HCT116 (cell line): ENCODE measurements at regions of chr13 and their contacts with region 1.

Region 1: GRCh38 chr13:28796938-28797257 is 23.2 kb upstream of the MTUS2 start:
- DNase-seq: no peak
- ATAC-seq: peak; percentile 35
- H3K4me3 ChIP-seq: no peak overlapping the region
- H3K27ac ChIP-seq: no peak overlapping the region
- H3K4me1 ChIP-seq: peaks cover 0 to 6% of the 10 kb centered on the region in 2 experiments; a peak in 2 of 4 replicates
- H3K27me3 ChIP-seq: no peaks in the 10 kb centered on the region
- CTCF ChIP-seq: no peak
- POLR2A ChIP-seq: no peak
- RAD21 ChIP-seq: no peak

Region 2: DNA sequence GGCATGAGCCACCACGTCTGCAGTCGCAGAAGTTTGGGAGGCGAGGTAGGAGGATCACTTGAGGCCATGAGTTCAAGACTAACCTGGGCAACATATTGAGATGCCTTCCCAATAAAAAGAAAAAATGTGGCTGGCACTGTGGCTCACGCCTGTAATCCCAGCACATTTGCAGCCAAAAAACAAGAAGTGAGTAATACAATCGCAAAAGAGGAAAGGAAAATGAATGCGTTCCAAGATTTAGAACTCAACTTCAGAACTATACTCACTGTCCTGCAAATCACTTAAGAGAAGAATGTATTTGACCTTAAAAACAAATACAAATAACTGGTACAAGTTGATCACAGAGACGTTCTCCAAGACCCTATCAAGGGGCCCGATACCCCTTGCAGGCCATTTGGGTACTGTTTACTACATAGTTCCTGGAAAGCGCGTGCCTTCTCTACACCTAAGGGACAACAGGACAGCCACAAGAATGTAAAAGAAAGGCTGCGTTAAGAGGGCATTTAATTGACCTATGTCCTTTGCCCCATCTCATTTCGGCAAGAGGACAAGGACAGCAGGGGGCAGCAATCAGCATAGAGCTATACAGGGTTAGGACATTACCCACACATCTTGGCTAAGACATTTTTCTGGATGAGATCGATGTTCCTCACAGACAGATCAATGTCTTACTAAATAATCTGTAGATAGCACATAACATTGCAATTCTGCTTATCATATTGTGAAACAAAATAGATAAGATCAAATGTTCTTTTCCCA is 737.9 kb before region 1 on chr13:
- CTCF ChIA-PET with region 1: interaction called, 5 read pairs
- POLR2A ChIA-PET with region 1: no interaction called
- RAD21 ChIA-PET with region 1: interaction called in 1 of 2 experiments, 3 read pairs
- intact Hi-C with region 1: loop called (anchors 1 kb)
- DNase-seq: peak; percentile 43
- ATAC-seq: peak; percentile 88
- H3K4me3 ChIP-seq: no peak overlapping the region
- H3K27ac ChIP-seq: no peak overlapping the region
- H3K4me1 ChIP-seq: no peaks in the 10 kb centered on the region
- H3K27me3 ChIP-seq: no peaks in the 10 kb centered on the region
- CTCF ChIP-seq: peak; percentile 46 to 82 (median 74); a peak in 5 of 6 replicates
- POLR2A ChIP-seq: no peak
- RAD21 ChIP-seq: peak; percentile 65

Region 3: DNA sequence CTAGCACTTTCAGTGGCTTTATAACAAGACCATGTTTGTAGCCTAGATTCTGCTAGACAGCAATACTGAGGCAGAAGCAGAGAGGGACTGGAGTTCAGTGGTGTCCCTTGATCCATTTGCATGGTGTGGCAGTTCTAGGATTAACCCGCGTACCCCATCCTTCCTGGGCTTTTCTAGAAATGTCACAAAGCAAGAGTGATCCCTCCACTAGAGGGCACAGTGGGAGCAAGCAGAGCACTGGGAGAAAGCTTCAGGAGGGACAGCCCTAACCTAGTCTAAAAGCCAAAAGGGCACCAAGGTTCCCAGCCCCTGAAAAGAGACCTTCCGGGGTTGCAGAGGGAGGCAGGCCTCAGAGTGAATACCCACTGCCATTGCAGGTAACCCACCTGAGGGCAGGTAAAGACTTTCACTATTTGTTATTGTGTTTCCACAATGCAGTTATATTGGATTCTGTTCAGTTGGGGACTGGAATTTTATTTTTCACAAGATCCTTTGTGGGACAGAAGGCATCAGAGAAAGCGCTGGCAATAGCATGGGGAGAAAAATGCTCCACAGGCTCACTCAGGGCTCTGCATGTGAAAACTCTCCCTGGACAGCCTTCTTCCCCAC is 472.6 kb before region 1 on chr13:
- CTCF ChIA-PET with region 1: interaction called, 8 read pairs
- POLR2A ChIA-PET with region 1: no interaction called
- RAD21 ChIA-PET with region 1: interaction called in 1 of 2 experiments, 3 read pairs
- intact Hi-C with region 1: loop called (anchors 1 kb)
- DNase-seq: peak; percentile 60
- ATAC-seq: peak; percentile 95
- H3K4me3 ChIP-seq: no peak overlapping the region
- H3K27ac ChIP-seq: no peak overlapping the region
- H3K4me1 ChIP-seq: no peaks in the 10 kb centered on the region
- H3K27me3 ChIP-seq: no peaks in the 10 kb centered on the region
- CTCF ChIP-seq: peak; percentile 57 to 86 (median 81); a peak in 5 of 6 replicates
- POLR2A ChIP-seq: no peak
- RAD21 ChIP-seq: peak; percentile 79

Region 4: DNA sequence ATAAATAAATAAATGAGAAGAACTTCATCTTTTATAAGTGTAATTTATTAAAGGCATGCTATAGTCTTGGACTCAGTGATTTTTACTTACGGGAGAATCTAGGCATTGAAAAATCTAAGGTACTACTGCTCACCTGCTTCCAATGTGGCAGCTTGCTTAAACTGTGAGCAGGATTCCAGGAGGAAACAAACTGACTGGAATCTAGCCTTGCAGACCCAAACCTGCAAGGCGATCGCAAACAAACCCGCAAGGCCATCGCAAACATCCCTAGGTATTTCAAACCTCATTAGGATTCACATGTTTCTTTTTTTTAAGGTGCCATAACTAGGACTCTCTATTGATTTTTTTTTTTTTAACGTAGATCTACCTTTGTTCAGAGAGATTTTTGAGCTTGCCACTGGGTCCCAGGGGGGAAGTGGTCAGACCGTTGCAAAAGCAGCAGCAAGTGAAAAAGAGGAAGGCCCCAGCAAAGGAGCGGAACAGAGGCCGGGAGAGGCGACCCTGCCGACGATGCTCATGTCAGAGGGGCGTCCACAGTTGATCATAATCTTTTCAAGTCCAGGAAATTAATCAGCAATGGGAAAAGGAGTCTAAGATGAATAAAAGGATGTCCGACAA is 269.4 kb before region 1 on chr13:
- CTCF ChIA-PET with region 1: no interaction called
- POLR2A ChIA-PET with region 1: no interaction called
- RAD21 ChIA-PET with region 1: no interaction called
- intact Hi-C with region 1: loop called (anchors 5 kb)
- DNase-seq: no peak
- ATAC-seq: no peak
- H3K4me3 ChIP-seq: no peak overlapping the region
- H3K27ac ChIP-seq: no peak overlapping the region
- H3K4me1 ChIP-seq: peaks cover 0 to 7% of the 10 kb centered on the region in 2 experiments; a peak in 1 of 4 replicates
- H3K27me3 ChIP-seq: no peaks in the 10 kb centered on the region
- CTCF ChIP-seq: no peak
- POLR2A ChIP-seq: no peak
- RAD21 ChIP-seq: no peak

Region 5: DNA sequence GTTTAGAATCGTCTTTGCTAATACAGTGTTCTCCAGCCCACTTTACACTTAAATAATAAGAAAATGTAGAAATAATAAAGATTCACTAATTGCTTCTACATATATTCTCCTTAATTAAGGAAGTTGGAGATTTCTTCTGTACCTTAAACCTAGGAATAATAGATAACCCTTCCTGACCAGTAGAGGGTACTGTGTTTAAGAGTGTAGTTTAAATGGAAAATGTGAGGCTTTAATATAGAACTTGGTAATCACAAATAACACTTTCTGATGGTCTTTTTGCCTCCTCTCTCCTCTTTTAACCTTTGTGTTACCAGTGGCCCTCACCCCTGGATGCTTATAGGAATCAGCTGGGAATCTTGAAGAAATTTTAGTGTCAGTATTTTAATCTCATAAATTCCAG is 117.3 kb before region 1 on chr13:
- CTCF ChIA-PET with region 1: interaction called, 17 read pairs
- POLR2A ChIA-PET with region 1: no interaction called
- RAD21 ChIA-PET with region 1: no interaction called
- intact Hi-C with region 1: loop called (anchors 1 kb)
- DNase-seq: no peak
- ATAC-seq: peak; percentile 56; the same call in 1 of the 2 replicates
- H3K4me3 ChIP-seq: no peak overlapping the region
- H3K27ac ChIP-seq: no peak overlapping the region
- H3K4me1 ChIP-seq: peaks cover 0 to 5% of the 10 kb centered on the region in 2 experiments; a peak in 1 of 4 replicates
- H3K27me3 ChIP-seq: no peaks in the 10 kb centered on the region
- CTCF ChIP-seq: peak; percentile 12 to 53 (median 35); a peak in 5 of 6 replicates
- POLR2A ChIP-seq: no peak
- RAD21 ChIP-seq: peak; percentile 37; the same call in 1 of the 2 replicates

Region 6: GRCh38 chr13:28718543-28719226 is 78.2 kb before region 1 on chr13 and contains the start of gene SLC46A3:
- CTCF ChIA-PET with region 1: interaction called, 7 read pairs
- POLR2A ChIA-PET with region 1: no interaction called
- RAD21 ChIA-PET with region 1: no interaction called
- intact Hi-C with region 1: loop called (anchors 2 kb)
- DNase-seq: peak; percentile 92
- ATAC-seq: peak; percentile 97
- H3K4me3 ChIP-seq: peak within 1 kb of the TSS; percentile 65 to 71
- H3K27ac ChIP-seq: peak within 1 kb of the TSS; percentile 20; the same call in 1 of the 2 replicates
- H3K4me1 ChIP-seq: peaks cover 14 to 31% of the 10 kb centered on the region in 2 experiments; a peak in 3 of 4 replicates
- H3K27me3 ChIP-seq: no peaks in the 10 kb centered on the region
- CTCF ChIP-seq: no peak
- POLR2A ChIP-seq: peak; percentile 41
- RAD21 ChIP-seq: no peak
- total RNA-seq, gene SLC46A3: 0.93 TPM

Region 7: DNA sequence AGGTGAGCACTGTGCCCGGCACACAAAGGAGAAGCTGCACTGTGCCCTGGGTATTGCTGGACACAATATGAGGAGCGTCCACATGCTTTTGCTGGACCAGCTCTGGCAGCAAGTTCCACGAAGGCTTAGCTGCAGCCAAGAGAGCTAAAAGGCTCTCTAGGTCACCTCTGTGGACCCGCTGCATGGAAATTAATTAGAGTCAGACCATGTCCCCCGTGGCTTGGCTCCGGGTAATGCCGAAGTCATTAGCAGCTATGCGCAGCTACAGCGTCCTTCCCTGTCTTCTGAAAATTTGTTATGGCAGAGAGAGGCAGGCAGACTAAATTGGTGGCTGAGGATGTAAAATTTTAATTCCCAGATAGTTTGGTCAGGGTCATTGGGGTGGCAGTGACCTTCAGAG is 527.1 kb after region 1 on chr13:
- CTCF ChIA-PET with region 1: no interaction called
- POLR2A ChIA-PET with region 1: no interaction called
- RAD21 ChIA-PET with region 1: no interaction called
- intact Hi-C with region 1: no loop called
- DNase-seq: no peak
- ATAC-seq: no peak
- H3K4me3 ChIP-seq: no peak overlapping the region
- H3K27ac ChIP-seq: no peak overlapping the region
- H3K4me1 ChIP-seq: no peaks in the 10 kb centered on the region
- H3K27me3 ChIP-seq: peaks cover 36% of the 10 kb centered on the region; the same call in 1 of the 2 replicates
- CTCF ChIP-seq: no peak
- POLR2A ChIP-seq: no peak
- RAD21 ChIP-seq: no peak